Activated T-helper 1 cell treated with anti-CD3 and anti-CD28 coated beads, Interleukin-12 subunit alpha, Interleukin-12 subunit beta, Interleukin-2, Interleukin-4 antibody, amounts not matched to agents 30 ng/mL and 10 ng/mL and 1 ng/mL, durations not matched to agents 14 hours and 24 hours and 36 hours (primary cell): ENCODE measurements at regions of chr6 and their contacts with region 1.

Region 1: GRCh38 chr6:157845493-157846259 is 22.6 kb downstream of the SNX9 start:
- DNase-seq: no peak
- H3K4me3 Mint-ChIP-seq: no peak overlapping the region
- H3K27ac Mint-ChIP-seq: no peak overlapping the region
- H3K4me1 Mint-ChIP-seq: peaks cover 57% of the 10 kb centered on the region
- H3K27me3 Mint-ChIP-seq: no peaks in the 10 kb centered on the region

Region 2: GRCh38 chr6:157830354-157831017 is 15.2 kb before region 1 on chr6:
- intact Hi-C with region 1: loop called (anchors 2 kb)
- DNase-seq: no peak
- H3K4me3 Mint-ChIP-seq: no peak overlapping the region
- H3K27ac Mint-ChIP-seq: peak overlapping the region; percentile 45
- H3K4me1 Mint-ChIP-seq: peaks cover 67% of the 10 kb centered on the region
- H3K27me3 Mint-ChIP-seq: no peaks in the 10 kb centered on the region

Region 3: DNA sequence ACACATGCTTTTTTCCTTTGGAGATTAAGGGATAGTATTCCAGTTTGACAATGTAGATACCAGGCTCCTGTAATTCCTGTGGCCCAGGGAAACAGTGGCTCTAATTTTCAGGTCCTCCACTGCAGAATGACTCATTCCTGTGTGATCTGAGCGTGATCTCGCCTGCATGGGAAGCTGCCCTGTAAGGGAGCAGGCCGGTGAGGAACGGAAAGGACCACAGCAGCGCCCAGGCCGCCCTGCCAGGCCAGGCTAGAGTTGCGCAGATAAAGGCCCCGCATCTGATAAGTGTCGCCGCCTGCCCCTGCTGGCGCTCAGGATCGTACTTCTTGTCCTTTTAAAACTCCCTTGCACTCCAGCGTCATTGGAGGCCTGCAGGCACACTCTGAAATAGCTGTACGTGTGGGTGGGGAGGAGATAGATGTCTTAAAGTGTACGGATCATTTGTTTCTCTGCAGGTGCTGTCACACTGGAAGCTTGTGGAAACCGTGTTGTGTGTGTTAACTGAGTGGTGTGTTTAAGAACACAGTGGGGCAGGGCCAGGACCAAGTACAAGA is 196.6 kb after region 1 on chr6:
- intact Hi-C with region 1: no loop called
- DNase-seq: no peak
- H3K4me3 Mint-ChIP-seq: no peak overlapping the region
- H3K27ac Mint-ChIP-seq: no peak overlapping the region
- H3K4me1 Mint-ChIP-seq: peaks cover 57% of the 10 kb centered on the region
- H3K27me3 Mint-ChIP-seq: no peaks in the 10 kb centered on the region